GM13977 (cell line): ENCODE measurements at regions of chr1 and their contacts with region 1.

Region 1: DNA sequence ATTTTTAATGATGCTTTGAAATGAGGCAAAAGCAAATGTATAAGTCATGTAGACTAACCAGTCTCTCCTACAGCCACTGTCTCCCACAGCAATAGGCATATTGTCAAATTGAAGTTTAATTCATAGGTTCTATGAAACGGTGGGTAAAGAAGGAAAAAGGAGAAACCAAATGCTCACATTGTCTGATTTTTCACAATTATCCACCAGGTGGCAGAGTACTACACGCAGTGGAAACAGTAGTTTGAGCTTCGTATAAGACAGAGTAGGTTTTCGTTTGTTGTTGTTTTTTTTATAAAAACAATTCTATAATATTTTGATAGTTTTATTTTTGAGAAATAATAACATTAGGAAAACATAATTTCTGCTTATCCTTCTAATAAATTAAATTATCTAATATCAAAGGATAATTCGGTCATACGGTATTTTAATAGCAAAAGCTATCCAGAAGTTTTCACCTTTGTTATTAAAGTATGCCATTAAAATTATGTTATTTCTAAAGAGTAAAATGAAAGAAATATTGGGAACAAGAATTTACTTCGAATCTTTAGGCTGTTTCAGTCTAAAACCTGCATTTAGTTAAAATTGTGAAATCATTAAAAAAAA is 39.1 kb downstream of the TYW3 start:
- DNase-seq: no peak
- CTCF ChIP-seq: peak; percentile 65

Region 2: GRCh38 chr1:74652597-74653139 is 119.3 kb before region 1 on chr1:
- in situ Hi-C with region 1: no loop called
- DNase-seq: peak; percentile 14
- CTCF ChIP-seq: no peak

Region 3: GRCh38 chr1:75198761-75199160 is 426.7 kb after region 1 on chr1:
- in situ Hi-C with region 1: loop called (anchors 10 kb)
- DNase-seq: no peak
- CTCF ChIP-seq: no peak